Activated CD4-positive, alpha-beta T cell treated with anti-CD3 and anti-CD28 coated beads for 36 hours (primary cell): ENCODE measurements at regions of chr16 and their contacts with region 1.

Region 1: DNA sequence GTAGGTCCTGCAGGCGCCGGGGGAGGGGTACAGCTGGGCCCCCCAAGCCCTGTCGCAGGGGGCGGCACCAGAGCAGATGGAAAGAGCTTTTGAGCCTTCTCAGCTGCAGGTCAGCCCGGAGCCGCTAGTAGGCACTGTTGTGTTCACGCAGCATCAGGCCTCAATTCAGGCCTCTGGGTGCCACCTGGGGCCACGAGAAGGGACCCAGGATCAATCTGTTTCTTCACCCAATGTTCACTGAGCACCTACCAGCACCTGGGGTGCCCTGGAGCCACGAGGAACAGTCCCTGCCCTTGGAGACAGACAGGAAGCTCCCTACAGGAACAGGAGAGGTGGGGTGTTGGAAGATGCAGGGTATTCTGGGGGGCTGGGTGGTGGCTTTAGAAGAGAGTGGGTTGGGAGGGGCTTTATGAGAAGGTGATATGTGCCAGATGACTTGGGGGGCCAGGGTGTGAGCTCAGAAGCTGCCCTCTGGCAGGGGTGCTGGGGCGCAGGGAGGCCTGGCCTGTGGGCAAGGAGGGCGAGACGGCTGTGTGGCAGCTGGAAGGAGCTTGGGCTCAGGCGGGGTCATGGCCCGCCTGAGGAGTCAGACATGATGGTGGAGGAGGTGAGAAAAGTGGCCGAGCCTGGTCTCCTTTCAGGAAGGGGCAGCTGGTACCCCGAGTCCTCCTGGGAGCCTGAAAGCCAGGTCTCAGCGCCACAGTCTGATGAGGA is 121.9 kb upstream of the GSE1 start:
- DNase-seq: peak; percentile 69
- ATAC-seq: peak; percentile 60
- H3K4me3 Mint-ChIP-seq: no peak overlapping the region
- H3K27ac Mint-ChIP-seq: no peak overlapping the region
- H3K4me1 Mint-ChIP-seq: peaks cover 1% of the 10 kb centered on the region
- H3K27me3 Mint-ChIP-seq: peaks cover 3% of the 10 kb centered on the region

Region 2: DNA sequence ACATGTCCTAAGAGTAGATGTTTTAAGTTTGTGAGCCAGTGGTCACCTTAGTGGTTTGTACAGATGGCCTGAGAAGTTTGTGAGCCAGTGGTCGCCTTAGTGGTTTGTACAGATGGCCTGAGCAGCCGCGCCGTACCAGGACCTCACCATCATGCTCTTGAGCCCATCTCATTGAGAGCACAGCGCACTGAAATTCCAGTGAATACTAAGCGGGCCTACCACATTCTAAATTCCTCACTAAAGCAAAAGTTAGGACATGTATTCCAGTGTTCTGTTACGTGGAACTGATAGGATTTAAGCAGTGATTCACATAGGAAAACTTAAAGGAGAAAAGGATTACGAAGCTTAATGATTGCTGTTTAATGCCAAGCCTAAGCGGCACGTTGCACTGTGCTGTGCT is 787.5 kb before region 1 on chr16:
- CTCF ChIA-PET with region 1: no interaction called
- POLR2A ChIA-PET with region 1: no interaction called
- intact Hi-C with region 1: no loop called
- DNase-seq: no peak
- ATAC-seq: no peak
- H3K4me3 Mint-ChIP-seq: no peak overlapping the region
- H3K27ac Mint-ChIP-seq: no peak overlapping the region
- H3K4me1 Mint-ChIP-seq: peaks cover 54% of the 10 kb centered on the region
- H3K27me3 Mint-ChIP-seq: no peaks in the 10 kb centered on the region

Region 3: DNA sequence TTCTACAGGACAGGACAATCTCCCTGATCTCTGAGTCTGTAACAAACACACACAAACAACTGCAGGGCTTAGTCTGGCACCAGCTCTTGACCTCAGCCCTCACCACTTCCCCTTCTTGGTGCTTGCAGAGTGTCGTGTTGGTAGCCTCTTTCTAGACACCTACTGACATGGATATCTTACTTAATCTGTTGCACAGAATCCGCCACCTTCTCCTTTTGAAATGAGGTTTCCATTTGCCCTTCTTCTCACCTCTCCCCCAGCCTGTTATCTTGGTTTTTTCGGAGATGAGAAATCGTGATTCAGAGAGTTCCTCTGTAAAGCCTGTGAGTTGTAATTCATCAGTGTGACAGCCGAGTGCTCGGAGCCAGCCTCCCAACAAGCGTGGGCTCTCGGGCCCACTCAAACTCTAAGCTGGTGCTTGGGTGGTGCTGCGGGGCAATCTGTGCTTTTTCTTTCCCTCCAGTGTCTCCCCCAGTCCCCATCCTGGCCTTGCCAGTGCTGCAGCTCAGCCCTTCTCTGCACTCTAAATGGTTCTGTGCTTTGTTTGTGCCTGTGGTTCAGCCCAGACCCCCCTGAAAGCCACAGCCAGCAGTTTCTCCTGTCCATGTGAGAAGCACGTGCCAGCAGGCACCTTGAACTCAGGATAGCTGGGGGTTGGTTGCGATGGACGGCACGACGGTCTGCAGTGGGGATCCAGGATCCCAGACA is 435.6 kb before region 1 on chr16:
- CTCF ChIA-PET with region 1: no interaction called
- POLR2A ChIA-PET with region 1: no interaction called
- intact Hi-C with region 1: no loop called
- DNase-seq: peak; percentile 88
- ATAC-seq: peak; percentile 92
- H3K4me3 Mint-ChIP-seq: peak overlapping the region; percentile 61
- H3K27ac Mint-ChIP-seq: peak overlapping the region; percentile 88
- H3K4me1 Mint-ChIP-seq: peaks cover 57% of the 10 kb centered on the region
- H3K27me3 Mint-ChIP-seq: no peaks in the 10 kb centered on the region

Region 4: DNA sequence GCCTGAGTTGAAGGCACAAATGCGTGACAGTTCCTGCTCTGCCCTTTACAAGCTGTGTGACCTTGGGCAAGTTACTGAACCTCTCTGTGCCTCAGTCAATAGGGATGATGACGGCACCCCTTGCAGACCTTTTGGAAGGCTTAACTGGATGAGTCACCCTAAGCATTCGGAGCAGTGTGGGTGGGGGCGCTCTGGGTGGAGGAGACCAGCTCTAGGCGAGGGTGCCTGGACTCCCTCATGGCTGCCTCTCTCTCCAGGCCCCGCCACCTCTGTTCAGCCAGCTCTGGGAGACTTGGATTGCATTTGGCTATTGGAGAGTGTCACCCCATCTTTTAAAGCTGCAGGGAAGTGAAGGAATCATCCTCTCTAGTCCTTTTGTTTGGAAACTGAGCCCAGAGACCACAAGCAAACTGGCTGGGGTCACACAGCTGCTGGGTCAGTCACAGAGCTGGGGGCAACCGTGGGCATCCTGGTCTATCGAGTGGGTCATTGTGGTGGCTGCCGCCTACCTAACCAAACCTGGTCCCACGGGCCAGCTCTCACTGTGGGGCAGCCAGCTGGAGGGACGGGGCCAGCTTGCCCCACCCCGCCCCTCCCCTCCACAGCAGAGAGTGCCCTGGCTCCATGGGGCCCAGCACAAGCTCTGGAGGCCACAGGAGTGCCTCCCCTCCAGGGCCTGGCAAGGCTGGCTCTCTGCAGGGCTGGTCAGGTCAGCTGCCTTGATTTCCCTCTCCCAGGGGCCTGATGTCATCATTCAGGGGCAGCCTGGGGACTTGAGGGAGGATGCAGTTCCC is 101.7 kb after region 1 on chr16:
- CTCF ChIA-PET with region 1: no interaction called
- POLR2A ChIA-PET with region 1: no interaction called
- intact Hi-C with region 1: loop called in 1 of 2 experiments (anchors 5 kb)
- DNase-seq: no peak
- ATAC-seq: no peak
- H3K4me3 Mint-ChIP-seq: no peak overlapping the region
- H3K27ac Mint-ChIP-seq: no peak overlapping the region
- H3K4me1 Mint-ChIP-seq: no peaks in the 10 kb centered on the region
- H3K27me3 Mint-ChIP-seq: no peaks in the 10 kb centered on the region